GM23248 (cell line): ENCODE measurements at regions of chr3 and their contacts with region 1.

Region 1: GRCh38 chr3:187319699-187320302 is 28.3 kb upstream of the MASP1 start:
- DNase-seq: peak; percentile 83
- H3K4me3 ChIP-seq: peak overlapping the region; percentile 73
- H3K27ac ChIP-seq: peak overlapping the region; percentile 51
- H3K4me1 ChIP-seq: peaks cover 13% of the 10 kb centered on the region
- H3K27me3 ChIP-seq: no peaks in the 10 kb centered on the region

Region 2: DNA sequence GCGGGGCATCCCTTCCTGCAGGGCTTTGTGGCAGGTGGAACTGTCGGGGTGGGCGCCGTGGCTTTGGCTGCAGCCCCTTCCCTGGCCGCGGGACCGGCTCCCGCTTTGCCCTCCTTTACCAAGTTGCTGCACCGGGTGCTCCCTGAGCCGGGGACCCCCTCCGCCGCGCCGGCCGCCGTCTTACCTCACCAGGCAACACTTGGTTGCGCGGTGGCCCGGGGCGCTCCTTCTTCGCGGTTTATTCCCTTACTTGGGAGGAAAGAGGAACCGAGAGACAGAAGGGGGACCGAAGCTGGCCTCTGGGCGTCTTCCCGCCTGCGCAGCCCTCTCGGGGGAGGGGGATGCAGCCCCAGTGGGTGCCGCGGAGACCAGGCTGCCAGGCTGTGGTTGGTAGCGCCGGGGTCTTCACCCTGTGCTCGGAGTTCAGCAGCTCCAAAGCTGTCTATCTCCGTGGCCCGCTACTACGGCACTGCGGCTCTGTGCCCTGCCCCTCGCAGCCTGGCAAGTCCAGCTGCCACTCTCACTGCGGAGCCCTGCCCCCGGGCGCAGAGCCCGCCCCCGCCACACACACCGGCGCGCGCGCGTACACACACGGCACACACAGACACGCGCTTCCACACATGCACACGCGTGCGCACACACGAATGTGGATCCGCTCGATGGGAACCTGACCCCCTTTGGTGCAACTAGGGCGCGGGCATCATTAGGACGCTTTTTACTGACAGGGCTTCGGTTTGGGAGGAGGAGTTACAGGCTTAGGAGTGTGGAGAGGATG is 957.9 kb before region 1 on chr3 and contains the start of gene DGKG:
- in situ Hi-C with region 1: no loop called
- DNase-seq: peak; percentile 31
- H3K4me3 ChIP-seq: peak within 1 kb of the TSS; percentile 44; the same call in 1 of the 2 replicates
- H3K27ac ChIP-seq: no peak within 1 kb of the TSS
- H3K4me1 ChIP-seq: no peaks in the 10 kb centered on the region
- H3K27me3 ChIP-seq: peaks cover 81% of the 10 kb centered on the region
- total RNA-seq, gene DGKG: 0.38 TPM in 1 of 2 replicates, not detected in the other

Region 3: DNA sequence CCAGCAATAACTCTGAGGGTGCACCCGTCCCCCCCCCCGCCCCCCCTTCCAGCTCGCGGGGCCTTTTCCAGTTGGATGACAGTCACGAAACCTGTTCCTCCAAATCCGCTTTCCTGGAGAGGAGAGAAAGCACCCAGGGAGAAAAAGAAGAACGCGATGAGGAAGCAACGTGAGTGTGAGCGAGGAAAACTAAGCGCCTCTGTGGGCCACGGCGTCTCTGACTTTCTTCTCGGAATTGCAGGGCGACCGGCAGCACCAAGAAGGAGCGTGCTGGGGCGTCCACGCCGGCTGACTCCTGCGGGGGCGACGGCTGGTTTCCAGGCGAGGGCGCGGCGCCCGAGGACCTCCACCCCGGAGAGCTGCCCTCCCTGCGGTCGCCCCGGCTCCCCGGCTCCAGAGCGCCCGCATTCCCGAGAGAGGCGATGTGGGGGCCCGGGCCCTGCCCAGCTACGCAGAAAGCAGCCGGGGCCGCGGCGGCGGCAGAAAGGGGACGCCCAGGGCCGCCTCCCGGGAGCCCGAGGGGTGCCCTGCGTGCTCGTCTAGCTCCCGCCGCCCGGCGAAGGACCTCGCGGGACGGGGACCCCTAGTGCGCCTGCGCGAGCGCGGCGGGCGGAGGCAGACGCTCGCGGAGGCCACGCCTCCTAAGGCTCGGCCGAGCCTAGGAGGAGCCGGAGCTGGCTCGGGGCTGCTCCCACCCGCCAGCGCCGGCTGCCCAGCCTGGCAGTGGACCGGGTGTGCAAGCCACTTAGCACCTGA is 492.6 kb before region 1 on chr3:
- in situ Hi-C with region 1: loop called (anchors 25 kb)
- DNase-seq: peak; percentile 93
- H3K4me3 ChIP-seq: peak overlapping the region; percentile 70
- H3K27ac ChIP-seq: no peak overlapping the region
- H3K4me1 ChIP-seq: peaks cover 4% of the 10 kb centered on the region
- H3K27me3 ChIP-seq: peaks cover 44% of the 10 kb centered on the region

Region 4: DNA sequence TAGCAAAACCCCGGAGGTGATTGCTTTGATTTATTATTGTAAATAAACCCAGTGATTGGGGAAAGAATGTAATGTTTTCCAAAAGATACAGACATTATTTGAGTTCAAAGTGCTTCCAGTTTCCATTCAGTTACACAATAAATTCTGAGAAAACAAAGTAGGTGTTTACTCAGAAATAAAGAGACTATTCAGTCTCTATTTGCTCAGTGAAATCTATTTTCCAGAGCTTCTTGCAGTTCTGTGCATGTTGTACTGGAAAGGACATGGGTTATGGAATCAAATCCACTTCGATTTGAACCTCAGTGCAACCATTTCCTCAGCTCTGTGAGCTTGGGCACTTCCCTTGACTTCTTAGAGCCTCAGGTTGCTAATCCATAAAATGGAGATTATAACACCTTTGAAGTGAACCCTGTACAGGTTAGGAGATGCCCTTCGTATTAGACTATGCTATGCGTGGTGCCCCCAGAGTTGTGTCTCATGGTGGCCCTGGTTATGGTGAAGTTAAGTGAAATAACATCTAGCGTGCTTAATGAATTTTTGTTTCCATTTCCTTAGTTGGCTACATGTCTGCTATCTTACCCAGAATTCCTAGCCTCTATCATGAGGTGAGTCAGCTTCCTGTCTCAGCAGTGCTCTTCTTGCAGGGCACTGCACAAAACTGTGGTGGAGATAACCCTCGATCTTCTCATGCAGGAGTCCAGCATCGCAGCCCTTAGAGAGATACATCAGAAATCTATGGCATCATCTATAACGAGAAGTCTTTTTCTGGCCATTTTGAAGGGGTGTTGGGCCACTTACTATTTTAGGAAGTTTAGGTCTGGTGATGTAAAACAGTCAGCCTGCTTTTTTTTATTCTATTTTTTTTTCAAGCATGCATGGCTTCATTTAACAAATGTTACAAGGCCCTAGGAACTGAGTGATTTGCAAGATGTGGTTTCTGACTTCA is 278.2 kb before region 1 on chr3:
- in situ Hi-C with region 1: no loop called
- DNase-seq: peak; percentile 44
- H3K4me3 ChIP-seq: no peak overlapping the region
- H3K27ac ChIP-seq: no peak overlapping the region
- H3K4me1 ChIP-seq: peaks cover 11% of the 10 kb centered on the region
- H3K27me3 ChIP-seq: no peaks in the 10 kb centered on the region

Region 5: DNA sequence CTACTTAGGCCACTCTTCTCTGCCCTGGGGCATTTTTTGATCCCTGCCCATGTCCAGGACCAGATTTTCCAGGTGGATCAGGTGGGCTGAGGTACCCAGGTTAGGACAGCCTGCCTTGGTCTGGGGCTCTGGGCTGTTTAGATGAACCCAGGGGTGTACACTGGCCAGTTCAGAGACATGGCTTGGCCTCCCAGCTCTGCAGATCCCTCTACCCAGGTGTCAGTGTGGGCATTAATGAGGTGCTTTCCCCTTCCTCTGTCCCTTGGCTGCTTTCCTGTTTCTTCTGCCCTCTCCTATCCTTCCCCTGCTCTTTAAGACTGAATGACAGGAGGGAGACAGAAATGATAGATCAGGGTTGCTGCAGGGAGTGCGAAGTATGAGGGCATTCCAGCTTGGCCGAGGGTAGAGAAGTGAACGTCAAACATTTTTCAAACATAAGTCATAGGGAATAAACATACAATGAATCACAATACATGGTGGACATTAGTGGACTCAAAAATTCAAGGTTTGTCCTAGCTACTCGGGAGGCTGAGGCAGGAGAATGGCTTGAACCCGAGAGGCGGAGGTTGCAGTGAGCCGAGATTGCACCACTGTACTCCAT is 92.0 kb before region 1 on chr3:
- in situ Hi-C with region 1: loop called (anchors 10 kb)
- DNase-seq: peak; percentile 89
- H3K4me3 ChIP-seq: no peak overlapping the region
- H3K27ac ChIP-seq: 0 out of 2 replicates have a peak overlapping the region, but pooled peaks have one; percentile 23
- H3K4me1 ChIP-seq: peaks cover 18% of the 10 kb centered on the region
- H3K27me3 ChIP-seq: no peaks in the 10 kb centered on the region

Region 6: DNA sequence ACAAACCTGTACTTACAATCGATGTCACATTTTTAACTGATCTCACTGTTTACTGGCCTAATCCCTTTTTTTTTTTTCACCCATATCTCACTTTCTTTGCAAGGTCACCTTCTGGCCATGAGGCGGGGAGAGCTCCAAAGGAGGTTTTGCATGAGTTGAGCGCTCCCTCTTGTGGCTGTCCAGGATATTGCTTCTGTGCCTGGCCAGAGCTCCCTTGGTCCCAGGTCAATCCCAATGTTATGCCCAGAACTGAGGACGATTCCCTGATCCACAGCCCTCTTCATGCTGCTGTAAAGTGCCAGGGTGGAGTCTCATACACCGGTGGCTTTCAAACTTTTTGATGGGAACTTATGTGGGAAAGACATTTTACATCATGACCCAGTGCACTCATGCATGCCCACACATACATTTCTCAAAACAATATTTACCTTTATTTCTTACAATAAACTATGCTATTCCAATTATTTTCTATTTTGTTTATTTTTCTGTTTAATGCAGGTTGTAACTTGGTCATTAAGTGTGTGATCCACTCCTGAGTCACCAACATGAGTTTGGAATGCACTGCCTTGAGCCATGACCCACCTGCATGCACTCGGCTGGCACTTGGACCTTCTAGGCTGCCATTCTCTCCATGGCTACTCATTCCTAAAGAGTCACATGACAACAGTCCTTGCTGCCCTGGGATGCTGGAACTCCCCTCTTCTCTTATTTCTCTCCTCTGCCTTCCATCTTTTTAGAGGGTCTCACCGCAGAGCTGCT is 360.0 kb after region 1 on chr3:
- in situ Hi-C with region 1: loop called (anchors 5 kb)
- DNase-seq: peak; percentile 80
- H3K4me3 ChIP-seq: no peak overlapping the region
- H3K27ac ChIP-seq: no peak overlapping the region
- H3K4me1 ChIP-seq: peaks cover 6% of the 10 kb centered on the region
- H3K27me3 ChIP-seq: no peaks in the 10 kb centered on the region